Activated CD8-positive, alpha-beta T cell treated with anti-CD3 and anti-CD28 coated beads for 36 hours (primary cell): ENCODE measurements at regions of chr15 and their contacts with region 1.

Region 1: DNA sequence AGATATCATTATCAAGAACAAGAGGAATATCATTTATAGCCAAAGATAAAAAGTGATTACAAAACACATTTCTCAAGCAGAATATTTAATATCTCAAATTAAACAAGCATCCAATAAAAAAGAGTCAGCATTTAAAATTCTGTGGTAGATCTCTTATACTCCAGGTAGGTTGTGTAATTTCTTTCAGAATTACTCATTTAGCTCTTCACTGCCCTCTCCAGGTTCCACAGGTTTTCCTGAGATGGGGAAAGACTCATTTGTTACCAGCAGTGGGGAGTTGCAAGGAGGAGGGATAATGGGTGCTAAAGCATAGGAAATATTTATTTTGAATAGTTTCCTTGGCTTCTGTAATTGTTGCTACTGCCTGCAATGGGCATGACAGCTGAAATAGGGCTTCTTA is 83.1 kb upstream of the RASGRP1 start:
- DNase-seq: no peak
- ATAC-seq: no peak
- H3K4me3 Mint-ChIP-seq: no peak overlapping the region
- H3K27ac Mint-ChIP-seq: no peak overlapping the region
- H3K4me1 Mint-ChIP-seq: peaks cover 71% of the 10 kb centered on the region
- H3K27me3 Mint-ChIP-seq: no peaks in the 10 kb centered on the region
- CTCF ChIP-seq: no peak

Region 2: GRCh38 chr15:38631126-38632075 is 16.3 kb before region 1 on chr15:
- CTCF ChIA-PET with region 1: interaction called, 21 read pairs
- POLR2A ChIA-PET with region 1: interaction called, 5 read pairs
- intact Hi-C with region 1: no loop called
- DNase-seq: peak; percentile 54
- ATAC-seq: peak; percentile 68
- H3K4me3 Mint-ChIP-seq: peak overlapping the region; percentile 33
- H3K27ac Mint-ChIP-seq: peak overlapping the region; percentile 93
- H3K4me1 Mint-ChIP-seq: peaks cover 56% of the 10 kb centered on the region
- H3K27me3 Mint-ChIP-seq: no peaks in the 10 kb centered on the region
- CTCF ChIP-seq: no peak

Region 3: GRCh38 chr15:38665586-38666305 is 18.1 kb after region 1 on chr15:
- CTCF ChIA-PET with region 1: interaction called, 44 read pairs
- POLR2A ChIA-PET with region 1: interaction called, 7 read pairs
- intact Hi-C with region 1: loop called (anchors 2 kb)
- DNase-seq: no peak
- ATAC-seq: peak; percentile 20
- H3K4me3 Mint-ChIP-seq: no peak overlapping the region
- H3K27ac Mint-ChIP-seq: peak overlapping the region; percentile 63
- H3K4me1 Mint-ChIP-seq: peaks cover 83% of the 10 kb centered on the region
- H3K27me3 Mint-ChIP-seq: no peaks in the 10 kb centered on the region
- CTCF ChIP-seq: no peak

Region 4: GRCh38 chr15:38671675-38672254 is 24.1 kb after region 1 on chr15:
- CTCF ChIA-PET with region 1: interaction called, 37 read pairs
- POLR2A ChIA-PET with region 1: interaction called, 7 read pairs
- intact Hi-C with region 1: loop called (anchors 2 kb)
- DNase-seq: peak; percentile 72
- ATAC-seq: peak; percentile 61
- H3K4me3 Mint-ChIP-seq: peak overlapping the region; percentile 62
- H3K27ac Mint-ChIP-seq: peak overlapping the region; percentile 95
- H3K4me1 Mint-ChIP-seq: peaks cover 75% of the 10 kb centered on the region
- H3K27me3 Mint-ChIP-seq: no peaks in the 10 kb centered on the region
- CTCF ChIP-seq: no peak

Region 5: DNA sequence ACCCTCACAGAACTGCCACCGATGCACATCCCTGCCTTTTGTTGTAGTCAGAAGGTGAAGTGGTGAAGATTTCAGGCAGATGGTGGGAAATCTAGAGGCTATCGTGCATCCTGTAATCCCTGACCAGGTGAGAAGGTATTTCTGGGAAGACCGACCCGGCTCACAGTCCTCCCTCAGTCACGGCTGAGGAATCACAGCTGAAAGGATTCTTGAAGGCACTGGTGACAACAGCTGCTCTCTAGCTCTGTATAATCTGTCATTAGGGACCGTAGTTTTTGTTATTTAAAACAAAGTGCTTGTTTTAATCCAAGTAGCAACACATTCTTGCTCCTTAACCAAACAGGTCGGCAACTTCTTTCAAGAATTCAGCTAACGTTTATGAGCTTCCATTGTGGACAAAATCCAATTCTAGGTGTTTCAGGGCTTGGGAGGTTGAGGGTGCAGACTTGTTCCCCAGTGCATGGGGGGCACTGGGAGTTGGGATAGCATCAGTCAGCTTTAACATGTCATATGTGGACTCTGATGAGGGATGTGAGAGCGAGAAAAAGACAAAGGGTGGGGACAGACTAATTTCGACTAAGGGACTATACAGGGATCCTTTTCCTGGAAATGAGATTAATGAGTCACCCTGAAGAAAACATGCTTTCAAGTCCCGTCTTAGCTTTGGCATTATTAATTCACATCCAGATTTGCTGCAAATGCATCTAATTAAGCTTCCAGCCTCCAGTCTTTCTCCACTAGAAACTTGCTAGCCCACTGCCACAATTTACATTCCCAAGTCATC is 57.9 kb after region 1 on chr15:
- CTCF ChIA-PET with region 1: no interaction called
- POLR2A ChIA-PET with region 1: no interaction called
- intact Hi-C with region 1: no loop called
- DNase-seq: no peak
- ATAC-seq: no peak
- H3K4me3 Mint-ChIP-seq: no peak overlapping the region
- H3K27ac Mint-ChIP-seq: no peak overlapping the region
- H3K4me1 Mint-ChIP-seq: peaks cover 10% of the 10 kb centered on the region
- H3K27me3 Mint-ChIP-seq: peaks cover 6% of the 10 kb centered on the region
- CTCF ChIP-seq: no peak